ENCODE measurements at regions of chr7 and their contacts with region 1.

Region 1: DNA sequence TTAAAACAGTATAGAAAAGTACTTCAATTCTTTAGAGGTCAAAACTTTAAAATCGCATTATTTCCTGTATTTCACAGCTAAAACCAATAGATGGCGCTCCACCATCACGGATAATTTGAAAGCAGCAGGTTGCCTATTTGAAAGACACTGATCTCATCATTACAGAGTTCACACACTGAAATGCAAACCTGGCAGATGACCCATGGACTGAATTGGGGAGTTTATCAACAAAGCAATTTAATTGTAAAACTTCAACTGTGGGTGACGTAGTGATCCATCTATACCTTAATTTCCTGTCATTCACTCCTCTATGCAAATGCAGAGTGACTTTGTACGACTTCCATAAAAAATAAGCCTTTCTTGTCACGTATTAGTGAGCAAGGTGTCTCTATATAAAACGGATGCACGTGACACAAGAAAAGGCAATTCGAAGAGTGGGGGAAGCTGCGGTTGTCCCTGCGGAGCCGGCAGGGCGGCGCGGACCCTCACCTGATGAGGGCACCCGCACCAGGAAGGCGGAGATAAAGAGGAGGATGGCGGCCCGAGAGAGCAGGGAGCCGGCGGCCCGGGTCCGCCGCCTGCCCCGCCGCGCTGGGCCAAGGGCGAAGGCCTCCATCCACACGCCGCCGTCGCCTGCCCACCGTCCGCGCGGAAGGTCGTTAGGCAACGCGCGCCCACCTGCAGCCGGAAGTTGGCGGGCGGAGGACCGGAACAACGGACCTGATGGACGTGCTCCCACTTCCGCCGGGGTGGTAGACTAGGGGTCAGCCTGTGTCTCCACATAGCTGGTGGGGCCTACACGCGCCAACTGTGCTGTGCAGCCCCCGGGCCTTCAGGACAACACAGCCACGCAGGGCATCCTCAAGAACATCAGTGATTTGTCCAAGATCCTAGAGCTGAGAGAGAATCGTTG is at the start of gene ZPBP:
- DNase-seq: peak; percentile 21 to 78 (median 58)
- ATAC-seq: peak; percentile 80 to 81
- H3K4me3 Mint-ChIP-seq: peak within 1 kb of the TSS; percentile 85 to 96 (median 91)
- H3K27ac Mint-ChIP-seq: peak within 1 kb of the TSS; percentile 67 to 95 (median 90)
- H3K4me1 Mint-ChIP-seq: peaks cover 6 to 10% (median 8%) of the 10 kb centered on the region in 4 donors
- H3K27me3 Mint-ChIP-seq: no peaks in the 10 kb centered on the region
- polyA plus RNA-seq, gene ZPBP: not detected

Region 2: GRCh38 chr7:50068961-50069551 is 23.8 kb before region 1 on chr7:
- POLR2A ChIA-PET with region 1: interaction called, 10 read pairs
- DNase-seq: peak in 8 of 10 donors; percentile 2 to 67 (median 44)
- ATAC-seq: peak; percentile 70 to 75
- H3K4me3 Mint-ChIP-seq: peak overlapping the region; percentile 80 to 98 (median 88)
- H3K27ac Mint-ChIP-seq: peak overlapping the region; percentile 87 to 99 (median 96)
- H3K4me1 Mint-ChIP-seq: peaks cover 15 to 30% (median 25%) of the 10 kb centered on the region in 4 donors
- H3K27me3 Mint-ChIP-seq: peaks cover 0 to 7% (median under 1%) of the 10 kb centered on the region in 5 donors

Measured in naive thymus-derived CD8-positive, alpha-beta T cell (primary cell).